Mammary epithelial cell (primary cell): ENCODE measurements at regions of chr16 and their contacts with region 1.

Region 1: DNA sequence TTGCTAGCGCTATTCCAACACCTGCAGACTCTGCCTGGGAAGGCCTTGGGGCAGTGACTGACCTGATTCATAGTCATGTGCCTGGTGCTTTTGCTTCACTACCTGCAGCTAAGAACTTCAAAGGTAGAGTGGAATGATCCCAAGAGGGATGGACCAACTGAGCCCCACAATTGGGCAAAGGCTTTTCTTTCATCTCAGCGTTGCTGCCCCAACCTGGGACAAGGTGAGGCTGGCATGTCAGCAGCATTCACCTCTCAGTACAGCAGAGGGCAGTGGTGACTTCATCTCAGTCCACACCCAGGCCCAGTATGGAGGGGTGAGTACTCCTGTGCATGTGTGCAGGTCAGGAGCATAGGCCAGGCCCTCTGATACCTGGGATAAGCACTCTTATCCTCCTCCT is 149.6 kb upstream of the GNAO1 start:
- DNase-seq: peak; percentile 36
- H3K4me3 ChIP-seq: no peak overlapping the region
- H3K27ac ChIP-seq: no peak overlapping the region
- H3K4me1 ChIP-seq: no peaks in the 10 kb centered on the region
- H3K27me3 ChIP-seq: no peaks in the 10 kb centered on the region
- CTCF ChIP-seq: peak; percentile 52 to 82

Region 2: DNA sequence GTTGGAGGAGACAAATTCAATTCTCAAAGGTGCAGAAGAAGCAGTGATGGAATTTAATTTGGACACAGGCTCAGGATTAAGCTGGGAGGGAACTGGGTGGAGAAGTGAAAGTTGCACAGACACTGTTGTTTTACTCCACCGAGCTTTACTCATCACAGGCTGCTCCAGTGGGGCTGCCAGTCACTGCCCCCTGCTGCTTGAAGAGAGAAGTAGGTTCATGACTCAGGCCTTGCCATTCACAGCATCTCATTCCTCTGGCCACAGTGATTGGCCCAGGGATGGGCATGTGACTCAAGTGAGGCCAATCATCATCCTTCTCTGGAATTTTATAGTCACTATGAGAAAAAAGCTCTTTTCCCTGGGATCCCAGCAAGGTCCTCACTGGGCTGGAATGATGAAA is 161.4 kb after region 1 on chr16:
- CTCF ChIA-PET with region 1: no interaction called
- dilution Hi-C with region 1: no loop called
- in situ Hi-C with region 1: no loop called
- intact Hi-C with region 1: loop called (anchors 5 kb)
- DNase-seq: peak; percentile 12
- H3K4me3 ChIP-seq: no peak overlapping the region
- H3K27ac ChIP-seq: no peak overlapping the region
- H3K4me1 ChIP-seq: no peaks in the 10 kb centered on the region
- H3K27me3 ChIP-seq: peaks cover 2% of the 10 kb centered on the region
- CTCF ChIP-seq: peak; percentile 24 to 33

Region 3: GRCh38 chr16:56281256-56281805 is 239.6 kb after region 1 on chr16:
- CTCF ChIA-PET with region 1: interaction called, 8 read pairs
- dilution Hi-C with region 1: no loop called
- in situ Hi-C with region 1: no loop called
- intact Hi-C with region 1: loop called (anchors 1 kb)
- DNase-seq: no peak
- H3K4me3 ChIP-seq: no peak overlapping the region
- H3K27ac ChIP-seq: no peak overlapping the region
- H3K4me1 ChIP-seq: no peaks in the 10 kb centered on the region
- H3K27me3 ChIP-seq: no peaks in the 10 kb centered on the region
- CTCF ChIP-seq: peak; percentile 18 to 54